ENCODE measurements at regions of chr11 and their contacts with region 1.

Region 1: GRCh38 chr11:73295231-73295995 is 12.7 kb upstream of the ARHGEF17 start:
- DNase-seq: peak; percentile 76 to 84 (median 81)
- H3K4me3 ChIP-seq: no peak overlapping the region
- H3K4me3 Mint-ChIP-seq: no peak overlapping the region
- H3K27ac ChIP-seq: no peak overlapping the region
- H3K27ac Mint-ChIP-seq: peak overlapping the region in 1 of 7 donors; percentile 77
- H3K4me1 ChIP-seq: peaks cover 11 to 15% of the 10 kb centered on the region in 2 donors
- H3K4me1 Mint-ChIP-seq: peaks cover 29% of the 10 kb centered on the region
- H3K27me3 ChIP-seq: no peaks in the 10 kb centered on the region
- H3K27me3 Mint-ChIP-seq: peaks cover 5 to 15% (median 6%) of the 10 kb centered on the region in 3 donors
- CTCF ChIP-seq: peak; percentile 95

Region 2: GRCh38 chr11:73252577-73253195 is 42.7 kb before region 1 on chr11:
- intact Hi-C with region 1: loop called in 1 of 2 experiments (anchors 5 kb)
- DNase-seq: no peak
- H3K4me3 ChIP-seq: no peak overlapping the region
- H3K4me3 Mint-ChIP-seq: no peak overlapping the region
- H3K27ac ChIP-seq: no peak overlapping the region
- H3K27ac Mint-ChIP-seq: peak overlapping the region in 1 of 7 donors; percentile 21
- H3K4me1 ChIP-seq: no peaks in the 10 kb centered on the region
- H3K4me1 Mint-ChIP-seq: no peaks in the 10 kb centered on the region
- H3K27me3 ChIP-seq: no peaks in the 10 kb centered on the region
- H3K27me3 Mint-ChIP-seq: peaks cover 0 to 2% (median 0%) of the 10 kb centered on the region in 3 donors
- CTCF ChIP-seq: peak; percentile 11

Region 3: GRCh38 chr11:73262851-73263495 is 32.4 kb before region 1 on chr11:
- intact Hi-C with region 1: no loop called
- DNase-seq: peak in 2 of 3 donors; percentile 30 to 74
- H3K4me3 ChIP-seq: no peak overlapping the region
- H3K4me3 Mint-ChIP-seq: peak overlapping the region in 1 of 2 donors; percentile 66
- H3K27ac ChIP-seq: no peak overlapping the region
- H3K27ac Mint-ChIP-seq: no peak overlapping the region
- H3K4me1 ChIP-seq: peaks cover 0 to 2% of the 10 kb centered on the region in 2 donors
- H3K4me1 Mint-ChIP-seq: peaks cover 15% of the 10 kb centered on the region
- H3K27me3 ChIP-seq: peaks cover 24 to 40% of the 10 kb centered on the region in 2 donors
- H3K27me3 Mint-ChIP-seq: peaks cover 53 to 58% (median 54%) of the 10 kb centered on the region in 3 donors
- CTCF ChIP-seq: no peak

Region 4: GRCh38 chr11:73335204-73335923 is 40.0 kb after region 1 on chr11:
- intact Hi-C with region 1: loop called (anchors 5 kb)
- DNase-seq: peak; percentile 61 to 78 (median 77)
- H3K4me3 ChIP-seq: no peak overlapping the region
- H3K4me3 Mint-ChIP-seq: no peak overlapping the region
- H3K27ac ChIP-seq: no peak overlapping the region
- H3K27ac Mint-ChIP-seq: no peak overlapping the region
- H3K4me1 ChIP-seq: peaks cover 2 to 6% of the 10 kb centered on the region in 2 donors
- H3K4me1 Mint-ChIP-seq: peaks cover 7% of the 10 kb centered on the region
- H3K27me3 ChIP-seq: no peaks in the 10 kb centered on the region
- H3K27me3 Mint-ChIP-seq: peaks cover 0 to 7% (median 4%) of the 10 kb centered on the region in 3 donors
- CTCF ChIP-seq: peak; percentile 97

Region 5: DNA sequence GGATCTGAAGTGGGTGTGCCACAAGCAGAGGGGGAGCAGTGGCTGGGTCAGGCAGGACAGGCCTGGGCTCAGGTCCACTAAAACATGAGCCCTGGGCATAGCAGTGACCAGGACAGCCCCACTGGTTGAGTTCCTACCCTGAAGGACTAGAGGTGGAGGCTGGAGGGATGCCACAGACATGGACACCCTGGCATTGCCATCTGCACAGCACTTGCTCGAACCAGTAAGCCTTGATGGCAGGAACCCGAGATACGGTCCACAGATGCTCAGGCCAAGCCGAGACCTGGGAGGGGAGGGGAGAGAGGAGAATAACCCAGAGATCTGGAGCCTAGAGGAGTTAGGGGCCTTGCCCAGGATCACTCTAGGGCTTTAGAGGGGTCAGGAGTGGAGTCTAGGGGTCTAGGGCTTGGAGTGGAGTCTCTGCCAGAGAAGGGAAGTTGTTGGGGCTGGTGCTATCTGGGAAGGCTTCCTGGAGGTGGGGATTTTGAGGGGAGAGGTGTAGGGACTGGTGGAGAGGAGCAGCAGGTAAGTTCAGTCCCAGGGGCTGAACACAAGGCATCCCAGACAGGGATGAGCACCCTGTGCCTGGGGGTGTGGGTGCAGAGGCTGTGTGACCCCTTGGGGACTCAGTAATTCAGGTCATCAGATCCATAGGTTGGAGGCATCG is 50.2 kb after region 1 on chr11:
- intact Hi-C with region 1: no loop called
- DNase-seq: no peak
- H3K4me3 ChIP-seq: no peak overlapping the region
- H3K4me3 Mint-ChIP-seq: no peak overlapping the region
- H3K27ac ChIP-seq: no peak overlapping the region
- H3K27ac Mint-ChIP-seq: peak overlapping the region in 1 of 7 donors; percentile 48
- H3K4me1 ChIP-seq: peaks cover 7 to 8% of the 10 kb centered on the region in 2 donors
- H3K4me1 Mint-ChIP-seq: peaks cover 6% of the 10 kb centered on the region
- H3K27me3 ChIP-seq: no peaks in the 10 kb centered on the region
- H3K27me3 Mint-ChIP-seq: peaks cover 6 to 18% (median 11%) of the 10 kb centered on the region in 3 donors
- CTCF ChIP-seq: no peak